Activated CD4-positive, alpha-beta T cell treated with anti-CD3 and anti-CD28 coated beads for 36 hours (primary cell): ENCODE measurements at regions of chr12 and their contacts with region 1.

Region 1: DNA sequence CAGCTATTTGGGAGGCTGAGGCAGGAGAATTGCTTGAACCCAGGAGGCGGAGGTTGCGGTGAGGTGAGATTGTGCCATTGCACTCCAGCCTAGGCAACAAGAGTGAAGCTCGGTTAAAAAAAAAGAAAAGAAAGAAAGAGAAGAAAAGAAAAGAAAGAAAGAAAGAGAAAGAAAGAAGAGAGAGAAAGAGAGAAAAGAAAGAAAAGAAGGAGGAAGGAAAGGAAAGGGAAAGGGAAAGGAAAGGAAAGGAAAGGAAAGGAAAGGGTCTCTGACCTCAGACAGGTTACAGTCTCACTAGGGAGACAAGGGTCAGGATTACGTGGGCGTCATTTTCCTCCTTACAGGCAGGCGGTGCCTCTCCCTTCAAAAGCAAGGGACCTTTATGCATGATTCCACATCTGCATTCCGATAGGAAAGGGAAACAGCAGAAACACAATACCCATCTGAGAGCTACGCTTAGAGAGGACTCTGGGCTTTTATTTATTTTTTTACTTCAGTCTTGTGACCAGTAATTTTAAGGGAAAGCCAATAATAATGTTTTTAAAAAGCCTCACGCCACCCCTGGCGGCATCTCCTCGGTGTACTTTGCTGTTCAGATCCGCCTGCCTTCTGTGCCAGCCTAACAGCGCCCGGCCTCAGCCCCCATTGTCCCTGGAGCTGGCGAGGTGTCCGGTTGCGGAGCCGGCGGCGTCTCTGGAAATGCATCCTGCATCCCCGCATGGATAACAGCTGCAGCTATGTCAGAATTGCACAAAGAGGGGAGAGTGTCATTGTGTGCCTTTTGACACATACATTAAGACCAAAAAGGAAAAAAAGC is 945 bp upstream of the HIP1R start:
- DNase-seq: peak; percentile 48
- ATAC-seq: peak; percentile 8
- H3K4me3 Mint-ChIP-seq: peak overlapping the region; percentile 75
- H3K27ac Mint-ChIP-seq: peak overlapping the region; percentile 74
- H3K4me1 Mint-ChIP-seq: peaks cover 31% of the 10 kb centered on the region
- H3K27me3 Mint-ChIP-seq: peaks cover 3% of the 10 kb centered on the region

Region 2: GRCh38 chr12:122646517-122647217 is 187.6 kb before region 1 on chr12:
- CTCF ChIA-PET with region 1: no interaction called
- POLR2A ChIA-PET with region 1: no interaction called
- intact Hi-C with region 1: no loop called
- DNase-seq: peak; percentile 81
- ATAC-seq: peak; percentile 97
- H3K4me3 Mint-ChIP-seq: peak overlapping the region; percentile 54
- H3K27ac Mint-ChIP-seq: peak overlapping the region; percentile 79
- H3K4me1 Mint-ChIP-seq: peaks cover 18% of the 10 kb centered on the region
- H3K27me3 Mint-ChIP-seq: peaks cover 2% of the 10 kb centered on the region

Region 3: DNA sequence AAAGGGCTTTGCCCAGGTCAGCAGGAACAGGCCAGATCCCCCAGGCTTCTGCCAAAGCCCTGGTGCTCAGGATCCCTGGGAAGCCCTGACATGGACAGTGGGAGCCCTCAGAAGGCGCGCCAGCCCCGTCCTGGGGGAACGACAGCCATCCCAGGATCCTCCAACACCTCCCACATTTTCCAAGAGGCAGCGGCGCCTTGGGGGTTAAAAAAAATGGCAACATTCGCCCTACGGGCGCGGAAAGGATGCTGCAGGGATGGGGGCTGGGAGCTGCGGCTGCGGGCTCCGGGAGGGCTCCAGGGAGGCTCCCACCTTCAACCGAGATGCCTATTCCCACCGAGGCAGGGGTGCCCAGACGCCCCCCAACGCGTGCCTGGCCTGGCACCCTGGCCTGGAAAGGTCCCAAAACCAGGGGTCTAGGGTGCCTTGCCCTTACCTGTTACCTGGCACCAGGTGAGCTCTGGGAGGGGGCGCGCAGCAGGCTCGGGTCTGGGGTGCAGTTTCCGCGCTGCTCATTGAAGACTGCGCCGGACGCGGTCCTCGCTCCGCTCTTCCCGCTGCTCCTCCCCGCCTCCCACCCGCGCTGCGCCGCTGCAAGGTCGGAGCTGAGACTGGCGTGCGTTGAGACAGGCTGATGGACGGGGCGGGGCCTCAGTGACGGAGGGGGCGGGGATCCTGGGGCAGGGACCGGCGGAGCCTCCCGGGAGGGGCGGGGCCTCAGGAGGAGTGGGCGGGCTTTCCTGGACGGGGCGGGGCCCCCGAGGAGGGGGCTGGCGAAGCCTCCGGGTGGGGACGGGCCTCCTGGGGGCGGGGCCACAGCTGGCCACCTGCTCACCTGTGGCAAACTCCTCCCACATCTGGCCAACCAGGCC is 131.8 kb after region 1 on chr12 and contains the start of gene ABCB9:
- CTCF ChIA-PET with region 1: no interaction called
- POLR2A ChIA-PET with region 1: no interaction called
- intact Hi-C with region 1: loop called in 1 of 2 experiments (anchors 1 kb)
- DNase-seq: peak; percentile 99
- ATAC-seq: peak; percentile 99
- H3K4me3 Mint-ChIP-seq: peak within 1 kb of the TSS; percentile 63
- H3K27ac Mint-ChIP-seq: peak within 1 kb of the TSS; percentile 42
- H3K4me1 Mint-ChIP-seq: peaks cover 2% of the 10 kb centered on the region
- H3K27me3 Mint-ChIP-seq: no peaks in the 10 kb centered on the region
- total RNA-seq, gene ABCB9: 3.8 to 6.3 TPM